ENCODE measurements at regions of chr19 and their contacts with region 1.

Region 1: DNA sequence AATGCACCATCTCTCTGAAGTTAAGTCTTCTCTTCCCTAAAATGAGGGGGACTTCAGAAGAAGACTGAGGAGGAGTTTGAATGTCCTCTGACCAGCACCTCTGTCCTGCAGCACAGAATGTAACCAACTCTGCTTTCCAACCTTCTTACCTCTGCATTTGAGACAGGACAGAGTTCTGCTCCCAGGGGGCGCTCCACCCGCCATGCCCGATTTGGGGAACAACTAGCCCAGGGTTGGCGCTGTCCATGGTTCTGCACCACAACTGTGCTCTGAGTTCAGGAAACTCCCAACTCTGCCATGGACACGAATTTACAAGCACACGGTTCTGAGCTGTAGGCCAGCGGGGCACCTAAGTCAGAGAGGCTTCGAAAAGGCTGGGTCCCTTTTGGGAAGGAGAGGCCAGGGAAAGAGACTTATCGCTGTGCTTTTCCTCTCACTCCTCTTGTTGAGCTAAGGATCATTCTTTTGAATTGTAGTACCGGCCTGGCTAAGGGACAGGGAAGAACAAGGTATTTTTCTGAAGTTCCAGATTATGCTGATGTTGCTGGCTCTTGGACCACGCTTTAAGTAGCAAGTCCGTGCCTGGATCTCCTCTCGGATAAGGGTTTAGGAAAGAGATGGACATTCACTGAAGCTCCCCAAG is 22.2 kb downstream of the SIGLEC5 start:
- DNase-seq: peak; percentile 8 to 33
- ATAC-seq: no peak
- H3K4me3 ChIP-seq: no peak overlapping the region
- H3K27ac ChIP-seq: no peak overlapping the region
- H3K4me1 ChIP-seq: no peaks in the 10 kb centered on the region
- H3K27me3 ChIP-seq: peaks cover 0 to 6% (median 6%) of the 10 kb centered on the region in 3 donors
- CTCF ChIP-seq: no peak
- POLR2A ChIP-seq: no peak

Region 2: DNA sequence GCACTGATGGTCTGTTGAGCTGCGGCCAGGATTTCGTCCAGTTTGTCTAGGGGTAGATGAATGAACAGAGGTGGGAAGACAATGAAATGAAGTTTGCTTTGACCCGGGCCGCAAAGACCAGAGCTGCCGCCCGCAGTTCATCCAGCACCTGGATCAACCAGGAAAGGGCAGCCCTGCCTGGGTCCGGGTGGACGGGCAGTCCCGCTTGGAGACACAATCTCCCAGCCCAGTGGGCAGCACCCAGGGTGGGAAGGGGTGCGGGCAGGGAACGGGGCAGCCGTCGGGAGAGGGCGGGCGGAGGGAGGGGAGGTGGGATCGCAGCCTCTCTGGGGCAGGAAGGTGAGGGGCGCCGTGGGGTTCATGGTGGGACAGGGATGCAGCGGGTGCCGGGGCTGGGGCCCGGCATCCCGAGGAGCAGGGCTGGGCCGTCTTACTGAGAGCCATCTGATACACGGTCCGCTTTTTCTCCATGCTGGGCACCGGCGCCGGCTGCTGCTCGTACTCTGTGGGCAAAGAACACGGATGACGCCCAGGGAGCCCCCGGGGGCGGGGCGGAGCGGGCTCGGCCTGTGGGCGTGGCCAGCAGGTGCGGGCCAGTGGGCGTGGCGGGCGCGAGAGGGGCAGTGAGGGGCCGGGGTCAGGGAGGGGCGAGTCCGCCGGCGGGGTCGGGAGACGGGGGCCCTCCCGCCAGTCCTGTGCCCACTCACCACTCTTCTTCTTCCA is 921.6 kb before region 1 on chr19:
- in situ Hi-C with region 1: no loop called
- intact Hi-C with region 1: no loop called
- DNase-seq: no peak
- ATAC-seq: no peak
- H3K4me3 ChIP-seq: no peak overlapping the region
- H3K27ac ChIP-seq: no peak overlapping the region
- H3K4me1 ChIP-seq: no peaks in the 10 kb centered on the region
- H3K27me3 ChIP-seq: peaks cover 29 to 32% (median 30%) of the 10 kb centered on the region in 3 donors
- CTCF ChIP-seq: no peak
- POLR2A ChIP-seq: no peak

Region 3: DNA sequence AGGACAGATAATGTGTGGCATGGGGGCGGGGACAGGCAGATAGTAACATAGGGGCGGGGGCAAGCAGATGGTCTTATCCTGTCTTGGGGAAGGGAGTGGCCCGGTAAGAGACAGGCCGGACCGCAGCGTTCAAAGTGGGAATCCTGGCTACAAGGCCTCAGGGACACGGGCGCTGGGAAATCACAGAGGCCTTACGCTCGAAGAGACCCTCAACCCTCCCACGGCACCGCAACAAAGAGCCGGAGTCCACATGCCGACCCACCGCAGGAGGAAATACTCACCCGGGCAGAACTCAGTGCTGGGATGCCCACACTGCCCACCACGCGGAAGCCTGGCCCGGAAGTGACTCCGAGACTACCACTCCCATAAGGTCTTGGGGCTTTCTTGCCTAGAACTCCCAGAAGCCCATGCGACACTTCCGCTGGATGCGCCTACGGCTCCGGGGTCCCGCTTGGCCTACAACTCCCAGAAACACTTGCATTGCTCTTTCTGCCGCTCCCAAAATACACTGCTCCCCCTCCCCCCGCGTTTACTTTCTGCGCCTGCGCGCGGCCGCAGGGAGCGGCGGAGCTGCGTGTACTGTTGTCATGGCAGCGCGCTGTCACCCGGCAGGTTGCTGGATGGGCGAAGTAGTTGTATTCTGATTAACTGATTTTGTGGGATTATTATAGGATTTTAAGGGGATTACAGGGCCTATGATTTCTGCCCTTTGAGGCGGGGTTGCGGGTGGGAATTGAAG is 499.8 kb before region 1 on chr19 and contains the start of gene CTU1:
- in situ Hi-C with region 1: loop called in 1 of 4 experiments (anchors 10 kb)
- intact Hi-C with region 1: no loop called
- DNase-seq: peak; percentile 98 to 99
- ATAC-seq: peak; percentile 100
- H3K4me3 ChIP-seq: peak within 1 kb of the TSS; percentile 65 to 87 (median 76)
- H3K27ac ChIP-seq: peak within 1 kb of the TSS; percentile 68 to 77 (median 74)
- H3K4me1 ChIP-seq: peaks cover 8 to 14% of the 10 kb centered on the region in 2 donors
- H3K27me3 ChIP-seq: no peaks in the 10 kb centered on the region
- CTCF ChIP-seq: peak in 2 of 5 experiments; percentile 24 to 26
- POLR2A ChIP-seq: peak; percentile 34 to 63
- total RNA-seq, gene CTU1: 5.8 to 11.9 (median 9.3) TPM

Region 4: DNA sequence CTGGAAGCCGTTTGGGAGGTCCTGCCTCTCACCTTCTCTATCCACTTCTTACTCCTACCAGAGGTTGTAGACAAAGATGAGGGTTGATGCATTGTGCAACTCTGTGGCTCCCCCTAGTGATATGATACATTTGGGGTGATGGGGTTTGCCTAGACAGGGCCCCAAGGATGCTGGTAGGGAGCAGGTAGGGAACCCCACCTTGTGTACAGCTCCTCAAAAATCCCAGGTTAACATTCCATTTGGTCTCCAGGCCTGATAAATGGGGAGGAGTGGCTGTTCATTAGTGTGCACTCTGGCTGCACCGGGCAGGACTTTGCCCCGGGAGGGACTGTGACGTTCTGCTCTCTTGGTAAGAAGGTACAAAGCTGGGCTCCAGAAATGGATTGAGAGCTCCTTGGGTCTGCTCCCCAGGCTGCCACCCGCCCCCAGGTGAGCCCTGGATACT is 169.0 kb before region 1 on chr19:
- in situ Hi-C with region 1: no loop called
- intact Hi-C with region 1: no loop called
- DNase-seq: no peak
- ATAC-seq: no peak
- H3K4me3 ChIP-seq: no peak overlapping the region
- H3K27ac ChIP-seq: no peak overlapping the region
- H3K4me1 ChIP-seq: no peaks in the 10 kb centered on the region
- H3K27me3 ChIP-seq: peaks cover 0 to 6% (median 2%) of the 10 kb centered on the region in 3 donors
- CTCF ChIP-seq: no peak
- POLR2A ChIP-seq: no peak

Region 5: DNA sequence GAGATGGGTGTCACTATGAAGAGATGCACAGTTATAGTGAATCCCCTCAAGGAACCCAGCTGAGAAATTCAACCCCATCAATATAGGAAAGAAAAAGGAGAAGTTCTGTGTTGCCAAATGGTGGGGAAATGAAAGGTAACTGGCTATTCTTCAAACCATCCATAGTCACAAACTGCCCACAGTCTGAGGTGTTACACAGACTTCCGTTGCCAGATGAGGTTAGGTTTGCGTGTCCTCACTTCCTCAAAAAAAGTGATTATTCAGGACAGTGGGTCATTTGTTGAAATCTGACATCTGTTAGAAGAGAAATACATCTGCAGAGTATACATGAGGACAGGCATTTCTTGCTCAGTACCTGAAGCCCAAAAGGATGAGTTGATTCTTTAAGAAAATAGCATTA is 13.1 kb after region 1 on chr19:
- in situ Hi-C with region 1: no loop called
- intact Hi-C with region 1: no loop called
- DNase-seq: no peak
- ATAC-seq: no peak
- H3K4me3 ChIP-seq: no peak overlapping the region
- H3K27ac ChIP-seq: no peak overlapping the region
- H3K4me1 ChIP-seq: no peaks in the 10 kb centered on the region
- H3K27me3 ChIP-seq: no peaks in the 10 kb centered on the region
- CTCF ChIP-seq: no peak
- POLR2A ChIP-seq: no peak

Region 6: DNA sequence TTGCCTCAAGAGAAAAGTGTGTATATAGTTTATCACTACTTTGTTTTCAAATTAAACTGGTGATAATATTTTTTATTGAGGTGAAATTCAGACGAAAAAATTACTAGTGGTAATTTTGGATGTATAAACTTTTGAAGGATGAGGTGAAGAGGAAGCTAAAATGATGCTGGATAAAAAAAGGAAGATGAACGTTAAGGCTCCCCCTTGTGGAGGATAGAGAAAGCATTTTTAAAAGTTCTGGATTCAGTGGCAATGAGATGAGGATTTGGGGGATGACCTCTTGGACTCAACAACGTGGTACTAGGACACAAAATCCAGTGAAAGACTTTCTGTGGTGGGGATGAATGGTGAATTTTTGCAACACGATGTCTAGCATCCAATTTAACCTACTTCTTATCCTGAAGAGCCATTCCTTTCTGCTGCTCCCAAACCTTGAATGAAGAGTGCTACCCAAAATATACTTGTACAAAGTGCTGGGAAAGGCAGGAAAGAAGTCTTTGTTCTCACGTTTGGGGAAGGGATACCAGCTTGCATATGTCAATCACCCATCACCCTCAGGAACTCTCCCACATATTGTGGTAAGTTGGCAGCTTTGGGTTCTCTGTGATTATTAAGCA is 29.4 kb after region 1 on chr19:
- in situ Hi-C with region 1: no loop called
- intact Hi-C with region 1: no loop called
- DNase-seq: no peak
- ATAC-seq: no peak
- H3K4me3 ChIP-seq: no peak overlapping the region
- H3K27ac ChIP-seq: no peak overlapping the region
- H3K4me1 ChIP-seq: no peaks in the 10 kb centered on the region
- H3K27me3 ChIP-seq: no peaks in the 10 kb centered on the region
- CTCF ChIP-seq: no peak
- POLR2A ChIP-seq: no peak

Measured in gastrocnemius medialis (tissue), 4 donors.